Activated T-helper 1 cell treated with anti-CD3 and anti-CD28 coated beads, Interleukin-12 subunit alpha, Interleukin-12 subunit beta, Interleukin-2, Interleukin-4 antibody, amounts not matched to agents 30 ng/mL and 10 ng/mL and 1 ng/mL, durations not matched to agents 14 hours and 24 hours and 36 hours (primary cell): ENCODE measurements at regions of chr6 and their contacts with region 1.

Region 1: DNA sequence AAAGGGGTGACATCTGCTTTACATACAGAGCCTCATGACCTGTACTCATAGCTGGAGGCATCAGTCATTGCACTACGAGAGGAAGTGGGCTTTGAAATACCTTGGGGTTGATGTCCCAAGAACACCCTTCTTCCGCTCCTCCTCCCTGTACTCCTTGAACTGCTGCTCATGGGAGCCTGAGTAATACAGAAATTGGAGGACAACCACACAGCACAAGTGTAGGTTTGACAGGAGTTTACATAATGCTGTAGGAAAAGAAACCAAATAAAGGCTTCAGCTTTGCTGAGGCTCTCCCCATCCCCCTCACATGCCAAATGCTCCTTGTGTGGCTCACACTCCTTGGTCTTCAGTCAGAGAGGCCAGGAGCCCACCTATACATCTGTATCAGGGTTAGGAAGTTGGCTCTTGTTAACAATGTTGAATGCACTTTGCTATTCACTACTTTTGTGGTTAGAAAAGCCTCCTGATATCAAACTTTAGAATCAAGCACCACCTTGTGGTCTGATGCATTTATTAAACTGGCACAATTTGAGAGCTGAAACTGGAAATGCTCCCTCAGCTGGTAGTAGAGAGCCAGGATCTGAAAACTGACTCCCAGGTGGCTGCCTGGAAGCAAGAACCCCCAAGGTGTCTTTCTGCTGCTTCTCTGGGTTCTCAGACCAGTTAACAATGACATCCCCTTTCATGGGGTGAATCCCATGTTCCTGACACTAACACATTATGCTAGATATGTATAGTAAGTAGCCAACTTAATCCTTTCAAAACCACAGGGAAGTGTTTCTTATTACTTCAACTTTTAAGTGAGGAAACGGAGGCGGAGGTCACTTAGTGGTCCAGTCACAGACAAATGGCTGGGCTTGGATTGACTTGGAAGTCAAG is 56.2 kb upstream of the EDN1 start:
- DNase-seq: peak; percentile 18
- H3K4me3 Mint-ChIP-seq: peak overlapping the region; percentile 16
- H3K27ac Mint-ChIP-seq: peak overlapping the region; percentile 31
- H3K4me1 Mint-ChIP-seq: peaks cover 55% of the 10 kb centered on the region
- H3K27me3 Mint-ChIP-seq: no peaks in the 10 kb centered on the region

Region 2: GRCh38 chr6:12060780-12061619 is 172.9 kb before region 1 on chr6:
- intact Hi-C with region 1: loop called (anchors 5 kb)
- DNase-seq: peak; percentile 71
- H3K4me3 Mint-ChIP-seq: peak overlapping the region; percentile 83
- H3K27ac Mint-ChIP-seq: peak overlapping the region; percentile 94
- H3K4me1 Mint-ChIP-seq: peaks cover 78% of the 10 kb centered on the region
- H3K27me3 Mint-ChIP-seq: no peaks in the 10 kb centered on the region

Region 3: GRCh38 chr6:12119085-12119588 is 114.8 kb before region 1 on chr6:
- intact Hi-C with region 1: loop called (anchors 1 kb)
- DNase-seq: peak; percentile 77
- H3K4me3 Mint-ChIP-seq: peak overlapping the region; percentile 36
- H3K27ac Mint-ChIP-seq: peak overlapping the region; percentile 83
- H3K4me1 Mint-ChIP-seq: peaks cover 67% of the 10 kb centered on the region
- H3K27me3 Mint-ChIP-seq: no peaks in the 10 kb centered on the region

Region 4: GRCh38 chr6:12163149-12163548 is 70.8 kb before region 1 on chr6:
- intact Hi-C with region 1: loop called (anchors 5 kb)
- DNase-seq: peak; percentile 53
- H3K4me3 Mint-ChIP-seq: peak overlapping the region; percentile 57
- H3K27ac Mint-ChIP-seq: peak overlapping the region; percentile 54
- H3K4me1 Mint-ChIP-seq: peaks cover 41% of the 10 kb centered on the region
- H3K27me3 Mint-ChIP-seq: no peaks in the 10 kb centered on the region

Region 5: GRCh38 chr6:12196326-12196936 is 37.5 kb before region 1 on chr6:
- intact Hi-C with region 1: no loop called
- DNase-seq: no peak
- H3K4me3 Mint-ChIP-seq: no peak overlapping the region
- H3K27ac Mint-ChIP-seq: no peak overlapping the region
- H3K4me1 Mint-ChIP-seq: no peaks in the 10 kb centered on the region
- H3K27me3 Mint-ChIP-seq: peaks cover 3% of the 10 kb centered on the region

Region 6: GRCh38 chr6:12605888-12606345 is 372.0 kb after region 1 on chr6:
- intact Hi-C with region 1: loop called (anchors 5 kb)
- DNase-seq: peak; percentile 20
- H3K4me3 Mint-ChIP-seq: no peak overlapping the region
- H3K27ac Mint-ChIP-seq: no peak overlapping the region
- H3K4me1 Mint-ChIP-seq: peaks cover 30% of the 10 kb centered on the region
- H3K27me3 Mint-ChIP-seq: no peaks in the 10 kb centered on the region